Cardiac septum (tissue), 1 donor: ENCODE measurements at regions of chr1 and their contacts with region 1.

Region 1: DNA sequence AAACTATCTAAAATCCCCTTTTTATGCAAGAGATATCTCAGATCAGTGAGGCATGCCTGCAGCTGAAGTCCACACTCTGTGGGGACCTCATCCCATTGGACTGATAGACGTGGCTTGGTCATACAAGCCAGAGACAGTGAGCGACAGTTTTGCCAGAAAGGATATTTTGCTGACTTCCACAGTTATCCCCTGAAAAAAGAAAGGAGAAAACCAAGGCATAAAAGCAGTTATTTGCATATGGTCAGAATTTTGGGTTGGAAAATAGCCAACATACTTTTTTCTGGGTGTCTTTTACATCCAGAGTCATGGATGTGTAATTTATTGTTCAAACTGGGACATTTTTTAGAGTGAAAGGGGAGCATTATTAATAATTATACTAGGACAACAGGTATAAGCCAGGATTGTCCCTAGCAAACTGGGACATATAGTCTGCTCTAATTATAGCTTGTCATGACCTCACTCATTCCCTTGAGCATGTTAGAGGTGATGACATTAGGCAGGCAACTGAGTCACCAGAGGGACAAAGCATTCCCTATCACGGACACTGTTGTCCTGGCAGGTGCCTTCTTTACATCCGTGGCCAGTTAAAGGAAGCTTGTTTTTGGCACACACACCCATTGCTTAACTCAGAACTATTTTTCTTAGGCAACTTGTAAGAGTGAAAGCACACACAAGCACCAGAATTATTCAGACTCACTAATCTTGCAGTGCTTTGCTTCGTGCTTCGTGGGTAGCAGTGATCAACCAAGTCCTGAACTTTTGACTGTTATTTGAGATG is 65.5 kb downstream of the PRRX1 start:
- DNase-seq: no peak

Region 2: GRCh38 chr1:170049176-170049800 is 680.1 kb before region 1 on chr1:
- intact Hi-C with region 1: loop called (anchors 10 kb)
- DNase-seq: no peak

Region 3: DNA sequence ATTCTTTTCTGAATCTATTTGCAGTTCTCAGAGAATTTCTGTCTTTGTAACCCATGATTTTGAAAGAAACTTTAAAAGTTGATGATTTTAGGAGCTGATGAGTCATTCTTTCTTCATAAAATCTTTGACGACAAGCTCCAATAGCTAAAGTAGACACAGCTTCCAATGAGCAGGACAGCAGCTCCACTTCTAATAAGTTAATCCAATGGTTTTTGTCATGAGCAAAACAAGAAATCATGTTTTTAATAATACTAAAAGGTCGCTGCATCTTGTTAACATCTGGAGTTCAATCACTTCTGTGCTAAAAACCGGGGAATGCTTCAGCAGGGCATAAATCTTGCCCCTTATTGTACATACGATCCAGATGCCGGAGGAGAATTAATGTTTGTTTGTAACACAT is 246.4 kb before region 1 on chr1:
- intact Hi-C with region 1: no loop called
- DNase-seq: no peak

Region 4: DNA sequence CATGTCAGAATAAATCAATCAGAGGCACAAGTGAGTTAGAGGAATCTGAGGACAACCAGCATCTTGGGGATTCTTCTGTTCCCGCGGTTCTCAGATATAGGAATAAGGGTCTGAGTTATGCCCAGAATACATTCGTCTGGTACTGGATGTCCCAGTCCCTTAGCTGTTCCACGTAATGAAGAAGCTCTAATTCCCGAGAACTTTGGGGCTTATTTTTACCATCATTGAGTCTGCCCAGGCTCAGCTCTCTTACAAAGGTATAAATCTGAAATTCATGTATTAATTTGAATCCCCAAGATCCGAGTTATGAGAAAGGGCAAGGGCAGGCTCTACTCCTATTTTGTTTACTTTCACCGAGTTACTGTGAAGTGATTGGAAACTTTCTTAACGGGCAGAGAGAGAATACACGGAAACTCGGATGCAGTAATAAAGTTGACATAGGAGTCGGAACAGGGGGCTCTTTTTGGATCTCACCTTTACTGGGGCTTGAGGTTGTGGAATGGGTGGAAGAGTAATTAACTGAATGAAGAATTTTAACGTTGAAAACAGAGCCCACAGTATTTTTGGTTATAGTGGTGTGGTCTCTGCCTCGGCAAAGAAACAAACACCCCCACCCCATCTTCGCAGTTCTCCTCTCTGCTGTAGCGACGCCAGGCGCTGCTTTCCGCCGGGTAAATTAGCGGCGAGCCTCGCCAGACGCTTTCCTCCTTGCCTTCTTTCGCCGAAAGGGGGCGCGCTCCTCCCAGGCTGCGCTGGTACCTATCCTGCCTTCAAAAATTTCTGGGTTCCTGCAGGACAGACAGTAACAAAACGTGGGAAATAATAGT is 58.4 kb before region 1 on chr1:
- intact Hi-C with region 1: loop called (anchors 10 kb)
- DNase-seq: no peak

Region 5: GRCh38 chr1:170692866-170693575 is 36.4 kb before region 1 on chr1:
- intact Hi-C with region 1: no loop called
- DNase-seq: no peak